PC-3 (cell line): ENCODE measurements at regions of chr6 and their contacts with region 1.

Region 1: DNA sequence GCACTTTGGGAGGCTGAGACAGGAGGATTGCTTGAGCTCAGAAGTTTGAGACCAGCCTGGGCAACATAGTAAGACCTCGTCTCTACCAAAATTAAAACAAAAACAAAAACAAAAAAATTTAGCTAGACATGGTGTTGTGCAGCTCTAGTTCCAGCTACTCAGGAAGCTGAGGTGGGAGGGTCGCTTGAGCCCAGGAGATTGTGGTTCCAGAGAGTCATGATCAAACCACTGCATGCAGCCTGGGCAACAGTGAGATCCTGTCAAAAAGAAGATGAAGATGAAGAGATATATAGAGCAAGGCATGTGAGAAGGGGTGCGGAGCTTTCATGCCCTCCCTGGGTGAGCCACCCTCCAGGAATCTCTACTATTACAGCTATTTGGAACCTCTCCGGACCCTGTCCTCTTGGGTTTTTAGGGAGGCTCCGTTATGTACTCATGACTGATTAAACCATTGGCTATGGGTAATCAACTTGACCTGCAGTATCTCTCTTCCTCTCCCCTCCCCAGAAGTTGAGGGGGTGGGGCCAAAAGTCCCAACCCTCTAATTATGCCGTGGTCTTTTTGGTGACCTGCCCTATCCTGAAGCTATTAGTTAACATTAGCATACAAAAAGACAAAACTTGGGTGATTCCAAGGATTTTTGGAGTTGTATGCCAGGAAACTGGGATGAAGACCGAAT is 9.0 kb downstream of the POLH start:
- DNase-seq: no peak
- ATAC-seq: no peak
- H3K4me3 ChIP-seq: no peak overlapping the region
- H3K27ac ChIP-seq: no peak overlapping the region
- H3K4me1 ChIP-seq: no peaks in the 10 kb centered on the region
- H3K27me3 ChIP-seq: no peaks in the 10 kb centered on the region
- CTCF ChIP-seq: no peak

Region 2: GRCh38 chr6:43570876-43571441 is 14.1 kb before region 1 on chr6:
- CTCF ChIA-PET with region 1: no interaction called
- POLR2A ChIA-PET with region 1: interaction called, 14 read pairs
- intact Hi-C with region 1: no loop called
- DNase-seq: no peak
- ATAC-seq: no peak
- H3K4me3 ChIP-seq: no peak overlapping the region
- H3K27ac ChIP-seq: no peak overlapping the region
- H3K4me1 ChIP-seq: no peaks in the 10 kb centered on the region
- H3K27me3 ChIP-seq: no peaks in the 10 kb centered on the region
- CTCF ChIP-seq: no peak

Region 3: DNA sequence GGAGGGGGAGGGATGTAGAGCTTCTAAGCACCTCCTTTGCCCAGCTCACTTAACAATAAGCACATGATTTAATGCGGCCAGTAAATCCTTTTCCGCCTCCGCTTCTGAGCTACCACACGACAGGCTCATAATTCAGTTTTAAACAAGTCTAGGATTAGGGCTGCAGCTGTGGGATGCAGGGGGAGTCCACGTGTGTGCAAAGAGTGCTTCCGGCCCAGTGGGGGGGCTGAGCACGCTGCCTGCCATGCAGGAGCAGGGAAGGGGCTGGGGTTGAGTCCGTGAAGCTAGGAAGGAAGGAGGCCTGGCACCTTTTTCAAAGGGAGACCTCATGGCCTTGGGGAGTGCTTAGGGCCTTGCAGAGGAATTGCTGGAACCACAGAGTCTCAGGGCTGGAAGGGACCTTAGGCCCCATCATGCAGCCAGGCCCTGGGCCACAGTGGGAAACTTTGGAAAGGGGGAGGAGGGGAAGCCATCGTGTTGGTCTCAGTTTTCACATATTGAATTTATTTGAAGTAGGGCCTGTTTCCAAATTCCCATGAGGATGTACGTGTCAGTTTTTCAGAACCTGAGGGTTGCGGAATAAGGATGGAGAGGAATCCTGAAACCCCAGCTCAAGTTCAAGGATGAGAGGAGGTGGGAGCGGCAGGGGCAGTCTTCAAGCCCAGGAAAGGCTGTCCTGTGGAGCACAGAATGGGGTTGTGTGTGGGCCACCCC is 281.1 kb after region 1 on chr6:
- CTCF ChIA-PET with region 1: no interaction called
- POLR2A ChIA-PET with region 1: no interaction called
- intact Hi-C with region 1: no loop called
- DNase-seq: no peak
- ATAC-seq: no peak
- H3K4me3 ChIP-seq: no peak overlapping the region
- H3K27ac ChIP-seq: no peak overlapping the region
- H3K4me1 ChIP-seq: no peaks in the 10 kb centered on the region
- H3K27me3 ChIP-seq: no peaks in the 10 kb centered on the region
- CTCF ChIP-seq: no peak